Dendritic cell treated with granulocyte-macrophage colony-stimulating factor and Interleukin-4, amounts not matched to agents 40 ng/mL and 50 ng/mL, for 4 days (primary cell): ENCODE measurements at regions of chr16 and their contacts with region 1.

Region 1: DNA sequence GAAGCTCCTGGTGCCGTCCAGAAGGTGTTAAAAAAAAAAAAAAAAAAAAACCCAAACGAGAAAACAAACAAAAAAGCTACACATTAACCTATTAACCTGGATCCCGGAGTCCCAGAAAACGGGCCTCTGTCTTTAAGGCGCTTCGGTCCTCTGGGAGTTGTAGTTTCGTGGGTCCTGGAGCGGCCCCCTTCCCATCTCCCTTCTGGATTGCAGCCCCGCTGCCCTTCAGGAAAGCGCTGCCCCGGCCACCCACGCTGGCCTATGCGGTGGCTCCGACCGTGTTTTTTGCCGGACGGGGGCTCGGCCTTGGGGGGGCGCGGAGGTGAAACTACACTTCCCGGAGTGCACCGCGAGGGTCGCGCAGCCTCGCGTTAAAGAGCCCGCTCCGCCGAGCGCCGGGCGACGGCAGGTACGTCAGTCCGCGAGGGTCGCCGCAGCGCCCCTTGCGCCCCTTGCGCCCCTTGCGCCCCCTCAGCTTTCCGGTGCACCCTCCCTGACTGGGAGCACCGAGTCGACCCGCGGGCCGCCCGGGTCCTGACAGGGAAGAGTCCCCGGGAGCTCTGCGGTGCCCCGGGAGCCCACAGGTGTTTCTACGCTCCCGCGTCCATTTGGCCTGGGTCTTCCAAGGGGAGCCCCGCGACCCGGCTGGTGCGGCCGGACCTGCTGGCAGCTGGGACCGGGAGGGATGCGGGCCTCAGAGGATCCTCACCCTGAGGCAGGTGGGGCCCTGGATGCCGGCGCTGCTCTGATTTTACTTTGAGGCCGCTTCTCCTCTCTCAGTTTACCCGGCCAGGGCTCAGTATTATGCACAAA is at the start of gene FCSK:
- H3K4me3 Mint-ChIP-seq: peak within 1 kb of the TSS; percentile 88
- H3K27ac Mint-ChIP-seq: peak within 1 kb of the TSS; percentile 96
- H3K4me1 Mint-ChIP-seq: peaks cover 6% of the 10 kb centered on the region
- H3K27me3 Mint-ChIP-seq: peaks cover 15% of the 10 kb centered on the region

Region 2: DNA sequence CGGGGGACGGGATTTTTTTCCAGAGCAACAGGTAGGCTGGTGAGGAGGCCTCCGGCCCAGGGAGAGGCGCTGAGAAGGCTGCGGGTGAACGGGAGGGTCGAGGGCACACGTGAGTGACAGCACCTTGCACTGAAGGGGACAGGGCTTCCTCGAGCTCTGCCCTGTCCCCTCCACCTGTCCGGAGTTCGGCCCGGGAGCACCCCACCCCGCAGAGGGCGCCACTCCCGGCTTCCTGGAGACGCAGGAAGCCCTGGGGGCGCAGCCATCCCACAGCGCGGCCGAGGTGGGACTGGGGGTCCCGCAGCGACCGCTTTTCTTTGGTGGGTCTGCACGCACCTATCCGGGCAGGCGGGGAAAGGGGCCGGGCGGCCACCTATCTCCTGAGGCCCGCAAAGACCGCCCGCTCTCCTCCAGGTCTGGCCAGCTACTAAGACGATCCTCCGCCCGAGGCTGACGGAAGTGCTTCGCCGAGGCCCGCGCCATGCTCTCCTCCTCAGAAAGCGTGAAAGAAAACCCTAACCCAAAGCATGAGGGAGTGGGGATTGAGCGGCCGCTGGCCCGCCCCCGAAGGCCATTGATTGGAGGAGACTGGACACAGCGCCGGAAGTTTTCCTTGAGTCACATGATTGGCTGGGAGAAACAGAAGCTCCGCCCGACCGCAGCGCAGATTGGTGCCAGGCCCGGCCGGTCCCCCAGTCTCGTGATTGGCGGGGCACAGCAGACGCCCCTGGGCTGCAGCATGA is 73.4 kb before region 1 on chr16:
- intact Hi-C with region 1: loop called (anchors 1 kb)
- H3K4me3 Mint-ChIP-seq: peak overlapping the region; percentile 94
- H3K27ac Mint-ChIP-seq: peak overlapping the region; percentile 87
- H3K4me1 Mint-ChIP-seq: peaks cover 32% of the 10 kb centered on the region
- H3K27me3 Mint-ChIP-seq: no peaks in the 10 kb centered on the region

Region 3: GRCh38 chr16:70402916-70403659 is 51.3 kb before region 1 on chr16:
- intact Hi-C with region 1: loop called (anchors 5 kb)
- H3K4me3 Mint-ChIP-seq: no peak overlapping the region
- H3K27ac Mint-ChIP-seq: peak overlapping the region; percentile 73
- H3K4me1 Mint-ChIP-seq: peaks cover 59% of the 10 kb centered on the region
- H3K27me3 Mint-ChIP-seq: no peaks in the 10 kb centered on the region

Region 4: DNA sequence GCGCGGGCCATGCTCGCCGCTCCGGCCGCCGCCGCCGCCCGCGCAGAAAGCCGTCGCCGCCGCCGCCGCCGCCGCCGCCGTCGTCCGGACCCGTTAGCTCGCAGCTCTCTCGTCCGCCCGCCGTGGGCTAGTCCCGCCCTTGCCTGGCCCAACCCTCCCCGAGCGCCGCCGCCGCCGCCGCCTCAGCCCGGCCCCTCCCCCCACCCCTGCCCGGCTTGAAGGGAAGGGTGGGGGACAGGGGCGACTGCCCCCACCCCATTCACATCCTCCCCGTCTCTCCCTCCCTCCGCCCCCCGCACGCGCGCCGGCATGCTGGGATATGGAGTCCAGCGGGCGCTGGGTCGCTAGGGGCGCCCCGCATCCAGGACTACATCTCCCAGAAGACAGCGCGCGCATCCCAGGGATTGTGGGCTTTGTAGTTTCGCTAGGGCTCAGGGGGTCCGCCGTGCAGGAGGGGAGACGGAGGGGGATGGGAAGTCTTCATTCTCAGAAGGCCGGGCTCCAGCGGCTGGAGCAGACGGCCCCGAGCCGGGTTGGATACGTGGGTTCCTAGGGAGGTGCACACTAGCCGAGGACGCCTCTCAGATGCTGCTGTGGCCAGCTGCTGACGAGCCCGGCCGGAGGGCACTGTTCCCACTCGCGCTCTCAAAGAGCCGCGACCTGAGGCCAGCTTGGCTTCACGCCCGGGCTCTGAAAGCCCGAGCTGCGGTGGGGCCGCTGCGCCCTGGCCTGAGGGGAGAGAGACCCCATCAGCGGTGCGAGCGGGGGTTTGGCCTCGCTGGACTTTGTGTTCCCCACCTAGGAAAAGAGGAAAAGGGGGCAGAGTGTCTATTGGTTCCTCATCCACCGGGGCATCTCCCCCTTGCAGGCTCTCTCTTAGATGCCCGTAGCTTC is 15.2 kb before region 1 on chr16 and contains the start of gene ST3GAL2:
- intact Hi-C with region 1: loop called (anchors 1 kb)
- H3K4me3 Mint-ChIP-seq: peak within 1 kb of the TSS; percentile 98
- H3K27ac Mint-ChIP-seq: peak within 1 kb of the TSS; percentile 91
- H3K4me1 Mint-ChIP-seq: peaks cover 46% of the 10 kb centered on the region
- H3K27me3 Mint-ChIP-seq: no peaks in the 10 kb centered on the region